CD14-positive monocyte (primary cell): ENCODE measurements at regions of chr21 and their contacts with region 1.

Region 1: DNA sequence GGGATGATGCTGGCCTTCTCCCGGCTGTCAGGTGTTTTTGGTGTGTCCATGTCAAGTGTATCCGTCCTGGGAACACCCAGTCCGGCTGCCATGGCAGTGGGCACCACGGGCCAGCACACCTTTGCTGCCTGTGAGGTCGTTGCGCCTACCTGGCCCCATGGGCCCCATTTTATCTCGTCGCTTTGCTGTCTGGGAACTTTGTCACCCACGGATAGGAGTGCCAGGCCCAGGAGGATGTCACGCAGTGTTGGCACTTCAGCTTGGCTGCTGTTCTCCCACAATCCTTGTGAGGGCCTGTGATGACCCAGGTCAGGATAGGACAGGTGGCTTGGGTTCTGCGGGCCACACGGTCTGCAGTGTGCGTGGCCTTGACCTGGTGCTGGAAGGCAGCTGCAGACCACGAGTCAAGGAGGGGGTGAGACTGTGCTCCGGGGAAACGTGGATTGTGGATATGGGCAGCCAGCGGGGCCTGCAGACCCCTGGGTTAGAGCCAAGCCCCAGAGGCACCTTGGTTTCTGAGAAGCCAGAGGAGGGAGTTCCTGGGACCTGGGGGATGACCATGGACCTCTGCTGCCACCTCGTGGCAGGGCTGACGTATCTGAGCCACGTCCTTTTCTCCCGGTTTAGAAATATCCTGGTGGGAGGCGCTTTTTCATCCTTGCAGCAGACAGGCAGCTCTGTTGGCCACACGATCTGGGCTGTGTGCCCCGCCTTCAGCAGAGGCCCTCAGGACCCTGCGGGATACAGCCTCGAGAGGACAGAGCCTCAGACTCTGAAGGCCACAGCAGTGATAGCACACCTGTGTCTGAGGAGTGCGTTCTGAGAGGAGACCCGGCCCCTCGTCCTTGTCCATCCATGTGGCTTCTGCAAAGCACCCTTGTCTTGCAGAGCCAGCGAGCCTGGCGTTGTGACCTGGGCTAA is 161.1 kb upstream of the COL6A1 start:
- DNase-seq: peak; percentile 73 to 79 (median 75)
- H3K4me3 ChIP-seq: no peak overlapping the region
- H3K4me3 Mint-ChIP-seq: no peak overlapping the region
- H3K27ac ChIP-seq: peak overlapping the region in 1 of 2 donors; percentile 53
- H3K27ac Mint-ChIP-seq: peak overlapping the region in 6 of 7 donors; percentile 50 to 85 (median 66)
- H3K4me1 ChIP-seq: peaks cover 24 to 27% of the 10 kb centered on the region in 2 donors
- H3K4me1 Mint-ChIP-seq: peaks cover 29% of the 10 kb centered on the region
- H3K27me3 ChIP-seq: no peaks in the 10 kb centered on the region
- H3K27me3 Mint-ChIP-seq: no peaks in the 10 kb centered on the region
- CTCF ChIP-seq: peak; percentile 89

Region 2: GRCh38 chr21:44965251-44966022 is 855.0 kb before region 1 on chr21:
- intact Hi-C with region 1: loop called in 1 of 2 experiments (anchors 5 kb)
- DNase-seq: peak; percentile 15 to 34 (median 18)
- H3K4me3 ChIP-seq: peak overlapping the region in 1 of 3 experiments; percentile 23
- H3K4me3 Mint-ChIP-seq: peak overlapping the region; percentile 41 to 65
- H3K27ac ChIP-seq: no peak overlapping the region
- H3K27ac Mint-ChIP-seq: peak overlapping the region in 6 of 7 donors; percentile 16 to 93 (median 35)
- H3K4me1 ChIP-seq: peaks cover 59% of the 10 kb centered on the region in 2 donors
- H3K4me1 Mint-ChIP-seq: peaks cover 60% of the 10 kb centered on the region
- H3K27me3 ChIP-seq: no peaks in the 10 kb centered on the region
- H3K27me3 Mint-ChIP-seq: peaks cover 1 to 9% (median 3%) of the 10 kb centered on the region in 3 donors
- CTCF ChIP-seq: no peak

Region 3: DNA sequence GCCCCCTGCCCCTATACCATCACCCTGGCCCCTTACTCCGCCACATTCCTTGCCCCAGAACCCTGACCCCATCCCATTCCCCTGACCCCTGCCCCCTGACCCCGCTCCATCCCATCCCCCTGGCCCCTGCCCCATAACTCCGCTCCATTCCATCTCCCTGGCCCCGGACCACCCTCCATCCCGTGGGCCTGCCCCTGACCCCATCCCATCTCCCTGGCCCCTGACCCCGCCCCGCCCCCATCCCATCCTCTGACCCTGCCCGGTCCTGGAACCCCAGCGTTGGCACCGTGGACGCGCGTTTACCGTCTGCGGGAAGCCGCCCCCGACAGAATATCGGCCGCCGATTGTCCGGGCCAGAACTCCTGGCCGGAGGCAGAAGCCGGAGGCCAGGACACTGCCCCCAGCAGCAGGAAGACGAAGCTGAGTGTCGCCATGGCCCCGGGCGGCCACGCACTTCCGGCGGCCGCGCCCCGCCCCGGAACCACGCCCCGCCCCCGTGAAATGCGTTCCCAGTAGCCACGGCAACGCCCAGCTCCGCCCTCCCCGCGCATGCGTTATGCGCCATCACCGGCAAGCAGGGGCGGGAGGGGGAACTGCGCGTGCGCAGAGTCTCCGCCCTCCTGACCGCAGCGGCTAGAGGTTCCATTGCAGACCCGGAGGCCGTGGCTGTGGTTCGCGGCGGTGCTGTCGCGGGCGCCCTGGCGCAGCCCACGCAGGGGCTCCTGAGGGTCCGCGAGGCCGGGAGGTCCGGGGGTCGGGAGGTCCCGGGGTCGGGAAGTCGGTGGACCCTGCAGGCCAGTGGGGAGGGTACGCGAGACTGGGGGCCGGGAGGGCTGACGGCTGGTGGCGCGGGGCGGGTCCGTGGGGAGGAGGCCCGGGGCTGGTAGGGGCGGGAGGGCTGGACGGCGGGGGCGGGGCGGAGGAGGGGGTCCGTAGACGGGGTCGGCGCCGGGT is 532.7 kb before region 1 on chr21 and contains the start of gene POFUT2:
- intact Hi-C with region 1: loop called in 1 of 2 experiments (anchors 2 kb)
- DNase-seq: peak; percentile 95 to 97 (median 97)
- H3K4me3 ChIP-seq: peak within 1 kb of the TSS; percentile 67 to 87 (median 82)
- H3K4me3 Mint-ChIP-seq: peak within 1 kb of the TSS; percentile 81 to 82
- H3K27ac ChIP-seq: peak within 1 kb of the TSS in 1 of 2 donors; percentile 81
- H3K27ac Mint-ChIP-seq: peak within 1 kb of the TSS; percentile 72 to 97 (median 90)
- H3K4me1 ChIP-seq: peaks cover 19 to 23% of the 10 kb centered on the region in 2 donors
- H3K4me1 Mint-ChIP-seq: peaks cover 20% of the 10 kb centered on the region
- H3K27me3 ChIP-seq: no peaks in the 10 kb centered on the region
- H3K27me3 Mint-ChIP-seq: no peaks in the 10 kb centered on the region
- CTCF ChIP-seq: no peak
- polyA plus RNA-seq, gene POFUT2: 1.8 to 21.3 (median 2.8) TPM

Region 4: DNA sequence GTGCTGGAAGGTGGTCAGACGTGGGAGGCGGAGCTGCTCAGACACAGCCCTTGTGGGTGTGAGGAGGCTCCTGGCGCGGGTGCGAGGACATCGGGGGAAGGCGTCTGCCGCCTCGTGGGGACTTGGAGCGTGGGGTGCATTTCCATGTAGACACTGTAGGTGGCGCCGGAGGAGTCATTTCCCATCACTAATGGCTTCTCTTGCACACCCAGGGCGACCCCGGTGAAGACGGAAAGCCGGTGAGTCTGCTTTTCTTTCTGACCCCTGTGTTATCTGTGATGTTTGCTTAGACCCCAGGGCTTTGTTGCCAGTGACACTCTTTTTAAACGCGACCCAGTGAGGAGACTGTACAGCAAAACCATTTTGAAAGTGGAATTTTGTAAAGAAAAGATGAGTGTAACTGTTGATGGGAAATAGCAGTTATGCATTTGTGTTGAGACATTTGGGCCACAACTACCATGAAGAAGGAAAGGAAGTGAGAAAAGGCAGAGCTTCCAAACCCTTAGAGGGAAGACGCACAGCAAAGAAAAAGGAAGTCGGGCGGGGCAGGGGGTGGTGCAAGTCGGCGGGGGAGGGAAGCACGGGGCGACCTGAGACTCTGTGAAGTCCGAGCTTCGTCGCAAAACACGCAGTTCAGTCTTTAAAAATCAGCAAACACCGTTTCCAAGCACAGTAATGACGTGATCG is 342.2 kb before region 1 on chr21:
- intact Hi-C with region 1: loop called in 1 of 2 experiments (anchors 5 kb)
- DNase-seq: peak; percentile 79 to 86 (median 85)
- H3K4me3 ChIP-seq: peak overlapping the region in 2 of 3 experiments; percentile 6 to 68
- H3K4me3 Mint-ChIP-seq: peak overlapping the region; percentile 69 to 86
- H3K27ac ChIP-seq: peak overlapping the region; percentile 80 to 91
- H3K27ac Mint-ChIP-seq: peak overlapping the region; percentile 94 to 98 (median 96)
- H3K4me1 ChIP-seq: peaks cover 50 to 51% of the 10 kb centered on the region in 2 donors
- H3K4me1 Mint-ChIP-seq: peaks cover 43% of the 10 kb centered on the region
- H3K27me3 ChIP-seq: no peaks in the 10 kb centered on the region
- H3K27me3 Mint-ChIP-seq: peaks cover 2 to 6% (median 5%) of the 10 kb centered on the region in 3 donors
- CTCF ChIP-seq: peak; percentile 92

Region 5: GRCh38 chr21:45643021-45643980 is 177.1 kb before region 1 on chr21 and contains the start of gene PCBP3:
- intact Hi-C with region 1: loop called in 1 of 2 experiments (anchors 2 kb)
- DNase-seq: peak; percentile 92 to 95 (median 93)
- H3K4me3 ChIP-seq: peak within 1 kb of the TSS in 2 of 3 experiments; percentile 46 to 63
- H3K4me3 Mint-ChIP-seq: peak within 1 kb of the TSS; percentile 74 to 87
- H3K27ac ChIP-seq: no peak within 1 kb of the TSS
- H3K27ac Mint-ChIP-seq: peak within 1 kb of the TSS in 1 of 7 donors; percentile 68
- H3K4me1 ChIP-seq: peaks cover 10 to 28% of the 10 kb centered on the region in 2 donors
- H3K4me1 Mint-ChIP-seq: peaks cover 24% of the 10 kb centered on the region
- H3K27me3 ChIP-seq: peaks cover 7 to 18% of the 10 kb centered on the region in 2 donors
- H3K27me3 Mint-ChIP-seq: peaks cover 17 to 26% (median 19%) of the 10 kb centered on the region in 3 donors
- CTCF ChIP-seq: no peak
- polyA plus RNA-seq, gene PCBP3: 0.34 to 0.49 TPM in 2 of 3 donors, not detected in the other